HepG2 (cell line): ENCODE measurements at regions of chr4 and their contacts with region 1.

Region 1: GRCh38 chr4:113094802-113095201 is 45.3 kb downstream of the ANK2 start:
- DNase-seq: no peak
- ATAC-seq: peak; percentile 39; the same call in 1 of the 3 replicates
- H3K4me3 ChIP-seq: no peak overlapping the region
- H3K27ac ChIP-seq: no peak overlapping the region
- H3K4me1 ChIP-seq: no peaks in the 10 kb centered on the region
- H3K27me3 ChIP-seq: no peaks in the 10 kb centered on the region
- CTCF ChIP-seq: peak; percentile 61
- EP300 ChIP-seq: no peak
- POLR2A ChIP-seq: no peak
- RAD21 ChIP-seq: 0 out of 2 replicates have a peak, but pooled peaks have one; percentile 26

Region 2: GRCh38 chr4:112765317-112765975 is 329.4 kb before region 1 on chr4:
- CTCF ChIA-PET with region 1: interaction called, 4 read pairs
- POLR2A ChIA-PET with region 1: no interaction called
- in situ Hi-C with region 1: no loop called
- intact Hi-C with region 1: loop called (anchors 10 kb)
- DNase-seq: peak; percentile 52
- ATAC-seq: peak; percentile 95
- H3K4me3 ChIP-seq: no peak overlapping the region
- H3K27ac ChIP-seq: no peak overlapping the region
- H3K4me1 ChIP-seq: peaks cover 8% of the 10 kb centered on the region; the same call in 1 of the 2 replicates
- H3K27me3 ChIP-seq: no peaks in the 10 kb centered on the region
- CTCF ChIP-seq: peak; percentile 65
- EP300 ChIP-seq: no peak
- POLR2A ChIP-seq: no peak
- RAD21 ChIP-seq: no peak

Region 3: GRCh38 chr4:112853662-112854256 is 241.0 kb before region 1 on chr4:
- CTCF ChIA-PET with region 1: no interaction called
- POLR2A ChIA-PET with region 1: no interaction called
- in situ Hi-C with region 1: no loop called
- intact Hi-C with region 1: loop called (anchors 1 kb)
- DNase-seq: no peak
- ATAC-seq: no peak
- H3K4me3 ChIP-seq: no peak overlapping the region
- H3K27ac ChIP-seq: no peak overlapping the region
- H3K4me1 ChIP-seq: no peaks in the 10 kb centered on the region
- H3K27me3 ChIP-seq: no peaks in the 10 kb centered on the region; a peak in 2 of 5 replicates
- CTCF ChIP-seq: 0 out of 2 replicates have a peak, but pooled peaks have one; percentile 15
- EP300 ChIP-seq: no peak
- POLR2A ChIP-seq: no peak
- RAD21 ChIP-seq: no peak

Region 4: DNA sequence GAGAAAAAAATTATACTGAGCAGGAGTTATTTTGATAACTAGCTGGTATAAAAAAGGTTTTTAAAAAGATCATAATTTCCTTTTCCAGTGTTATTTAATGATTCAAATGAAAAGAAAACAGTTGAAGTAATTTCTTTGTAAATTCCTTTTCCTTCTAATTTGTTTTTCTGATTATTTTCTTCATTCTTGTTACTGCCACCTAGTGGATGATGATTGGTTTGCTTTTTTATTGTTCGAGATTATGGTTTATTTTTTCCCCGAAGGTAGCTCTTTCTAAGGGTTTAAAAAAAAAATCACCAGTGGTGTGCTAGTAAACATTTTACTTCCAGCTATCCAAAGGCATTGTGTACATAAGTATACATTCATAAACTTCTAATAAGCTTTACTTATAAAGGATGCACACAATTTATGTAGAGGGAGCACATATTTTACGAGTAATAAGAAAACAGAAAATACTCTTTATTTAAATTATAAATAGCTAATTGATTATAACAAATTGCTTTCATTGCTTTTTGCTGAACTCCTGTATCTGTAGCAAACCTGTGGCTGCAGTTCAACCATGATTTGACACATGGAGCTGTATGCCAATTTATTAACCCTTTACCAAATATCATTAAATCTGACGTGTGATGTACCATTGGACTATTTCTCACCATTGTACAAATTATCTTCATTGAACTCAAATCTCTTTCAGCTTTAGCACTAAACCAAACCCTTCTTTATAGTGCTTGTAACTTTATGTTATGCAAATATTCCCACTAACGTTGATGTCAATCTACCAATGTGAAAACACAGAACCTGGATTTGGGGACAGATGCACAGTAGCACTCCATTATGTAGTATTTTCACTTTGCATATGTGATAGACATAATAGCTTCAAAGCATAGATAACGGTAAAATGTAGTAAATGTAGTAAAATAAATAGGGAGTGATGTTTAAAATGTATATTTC is 143.2 kb before region 1 on chr4:
- CTCF ChIA-PET with region 1: no interaction called
- POLR2A ChIA-PET with region 1: no interaction called
- in situ Hi-C with region 1: no loop called
- intact Hi-C with region 1: loop called (anchors 5 kb)
- DNase-seq: peak; percentile 9
- ATAC-seq: no peak
- H3K4me3 ChIP-seq: no peak overlapping the region
- H3K27ac ChIP-seq: no peak overlapping the region
- H3K4me1 ChIP-seq: no peaks in the 10 kb centered on the region
- H3K27me3 ChIP-seq: no peaks in the 10 kb centered on the region
- CTCF ChIP-seq: peak; percentile 16; the same call in 1 of the 2 replicates
- EP300 ChIP-seq: no peak
- POLR2A ChIP-seq: no peak
- RAD21 ChIP-seq: no peak

Region 5: DNA sequence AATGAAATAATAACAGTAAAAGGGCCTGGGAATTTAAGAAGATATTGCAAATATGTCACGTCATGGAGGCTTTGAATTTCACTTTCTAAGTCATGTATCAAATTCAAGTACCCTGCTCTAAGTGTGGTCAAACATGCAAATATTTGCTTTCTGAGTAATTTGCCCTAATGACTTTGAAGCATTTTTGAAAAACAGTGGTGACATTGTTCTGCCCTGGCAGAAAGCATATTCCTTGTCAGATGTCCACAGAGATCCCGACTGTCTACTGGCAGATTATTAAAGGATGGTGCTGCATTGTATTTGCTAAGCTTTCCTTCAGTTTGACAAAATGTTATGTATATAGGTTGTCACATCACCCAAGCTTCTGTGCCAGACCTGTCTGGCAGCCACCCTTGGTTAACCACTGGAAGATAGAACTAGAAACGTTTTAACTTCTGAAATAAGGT is 47.1 kb after region 1 on chr4:
- CTCF ChIA-PET with region 1: no interaction called
- POLR2A ChIA-PET with region 1: no interaction called
- in situ Hi-C with region 1: no loop called
- intact Hi-C with region 1: no loop called
- DNase-seq: peak; percentile 98
- ATAC-seq: peak; percentile 87
- H3K4me3 ChIP-seq: peak overlapping the region in 2 of 3 experiments; percentile 1 to 15; a peak in 1 of 6 replicates
- H3K27ac ChIP-seq: peak overlapping the region; percentile 49
- H3K4me1 ChIP-seq: peaks cover 52% of the 10 kb centered on the region
- H3K27me3 ChIP-seq: no peaks in the 10 kb centered on the region
- CTCF ChIP-seq: no peak
- EP300 ChIP-seq: peak; percentile 64 to 91; a peak in 3 of 4 replicates
- POLR2A ChIP-seq: peak in 1 of 2 experiments; percentile 59; a peak in 2 of 4 replicates
- RAD21 ChIP-seq: no peak